ENCODE measurements at regions of chr4 and their contacts with region 1.

Region 1: GRCh38 chr4:40149960-40150385 is 46.9 kb upstream of the RHOH start:
- DNase-seq: peak; percentile 61 to 88 (median 66)
- ATAC-seq: peak; percentile 96
- H3K4me3 ChIP-seq: no peak overlapping the region
- H3K27ac ChIP-seq: no peak overlapping the region
- H3K4me1 ChIP-seq: no peaks in the 10 kb centered on the region
- H3K27me3 ChIP-seq: no peaks in the 10 kb centered on the region
- CTCF ChIP-seq: peak; percentile 78 to 91 (median 86)
- EP300 ChIP-seq: no peak
- POLR2A ChIP-seq: no peak
- RAD21 ChIP-seq: peak; percentile 94 to 97

Region 2: GRCh38 chr4:39732728-39733127 is 417.2 kb before region 1 on chr4:
- CTCF ChIA-PET with region 1: no interaction called
- POLR2A ChIA-PET with region 1: no interaction called
- in situ Hi-C with region 1: no loop called
- intact Hi-C with region 1: no loop called
- DNase-seq: no peak
- ATAC-seq: no peak
- H3K4me3 ChIP-seq: no peak overlapping the region
- H3K27ac ChIP-seq: no peak overlapping the region
- H3K4me1 ChIP-seq: peaks cover 3 to 14% of the 10 kb centered on the region in 2 experiments; a peak in 4 of 5 replicates
- H3K27me3 ChIP-seq: no peaks in the 10 kb centered on the region
- CTCF ChIP-seq: no peak
- EP300 ChIP-seq: no peak
- POLR2A ChIP-seq: no peak
- RAD21 ChIP-seq: no peak

Region 3: GRCh38 chr4:39786838-39787237 is 363.1 kb before region 1 on chr4:
- CTCF ChIA-PET with region 1: no interaction called
- POLR2A ChIA-PET with region 1: no interaction called
- in situ Hi-C with region 1: no loop called
- intact Hi-C with region 1: no loop called
- DNase-seq: no peak
- ATAC-seq: no peak; the same call in 2 of the 3 replicates
- H3K4me3 ChIP-seq: no peak overlapping the region
- H3K27ac ChIP-seq: no peak overlapping the region
- H3K4me1 ChIP-seq: peaks cover 6 to 8% of the 10 kb centered on the region in 2 experiments; a peak in 4 of 5 replicates
- H3K27me3 ChIP-seq: no peaks in the 10 kb centered on the region
- CTCF ChIP-seq: no peak
- EP300 ChIP-seq: no peak
- POLR2A ChIP-seq: no peak
- RAD21 ChIP-seq: no peak

Region 4: GRCh38 chr4:39970671-39971640 is 179.0 kb before region 1 on chr4:
- CTCF ChIA-PET with region 1: no interaction called
- POLR2A ChIA-PET with region 1: no interaction called
- in situ Hi-C with region 1: no loop called
- intact Hi-C with region 1: no loop called
- DNase-seq: peak in 2 of 4 experiments; percentile 18 to 87
- ATAC-seq: peak; percentile 96
- H3K4me3 ChIP-seq: no peak overlapping the region
- H3K27ac ChIP-seq: peak overlapping the region; percentile 58; the same call in 2 of the 3 replicates
- H3K4me1 ChIP-seq: peaks cover 15 to 19% of the 10 kb centered on the region in 2 experiments; a peak in 4 of 5 replicates
- H3K27me3 ChIP-seq: no peaks in the 10 kb centered on the region
- CTCF ChIP-seq: no peak
- EP300 ChIP-seq: peak; percentile 38; the same call in 1 of the 2 replicates
- POLR2A ChIP-seq: no peak
- RAD21 ChIP-seq: no peak

Region 5: GRCh38 chr4:40199999-40200874 is 50.3 kb after region 1 on chr4:
- CTCF ChIA-PET with region 1: no interaction called
- POLR2A ChIA-PET with region 1: no interaction called
- in situ Hi-C with region 1: no loop called
- intact Hi-C with region 1: loop called (anchors 2 kb)
- DNase-seq: peak in 1 of 4 experiments; percentile 83
- ATAC-seq: peak; percentile 33
- H3K4me3 ChIP-seq: peak overlapping the region; percentile 50
- H3K27ac ChIP-seq: peak overlapping the region; percentile 85
- H3K4me1 ChIP-seq: peaks cover 34 to 48% of the 10 kb centered on the region in 2 experiments; a peak in 4 of 5 replicates
- H3K27me3 ChIP-seq: no peaks in the 10 kb centered on the region
- CTCF ChIP-seq: no peak
- EP300 ChIP-seq: 0 out of 2 replicates have a peak, but pooled peaks have one; percentile 4
- POLR2A ChIP-seq: no peak; the same call in 1 of the 2 replicates
- RAD21 ChIP-seq: 0 out of 4 replicates have a peak, but pooled peaks of 1 of the 2 experiments have one; percentile 9

Region 6: GRCh38 chr4:40228497-40229365 is 78.8 kb after region 1 on chr4:
- CTCF ChIA-PET with region 1: no interaction called
- POLR2A ChIA-PET with region 1: no interaction called
- in situ Hi-C with region 1: no loop called
- intact Hi-C with region 1: loop called (anchors 5 kb)
- DNase-seq: peak; percentile 39 to 49 (median 48)
- ATAC-seq: peak; percentile 75
- H3K4me3 ChIP-seq: no peak overlapping the region
- H3K27ac ChIP-seq: 0 out of 3 replicates have a peak overlapping the region, but pooled peaks have one; percentile 6
- H3K4me1 ChIP-seq: peaks cover 6 to 8% of the 10 kb centered on the region in 2 experiments; a peak in 4 of 5 replicates
- H3K27me3 ChIP-seq: no peaks in the 10 kb centered on the region
- CTCF ChIP-seq: peak; percentile 57 to 71 (median 61)
- EP300 ChIP-seq: no peak
- POLR2A ChIP-seq: no peak
- RAD21 ChIP-seq: peak; percentile 62 to 75

Region 7: GRCh38 chr4:40309250-40309774 is 159.3 kb after region 1 on chr4:
- CTCF ChIA-PET with region 1: interaction called, 20 read pairs
- POLR2A ChIA-PET with region 1: interaction called, 4 read pairs
- in situ Hi-C with region 1: loop called (anchors 5 kb)
- intact Hi-C with region 1: loop called (anchors 1 kb)
- DNase-seq: peak; percentile 72 to 92 (median 76)
- ATAC-seq: peak; percentile 90
- H3K4me3 ChIP-seq: no peak overlapping the region
- H3K27ac ChIP-seq: no peak overlapping the region; the same call in 2 of the 3 replicates
- H3K4me1 ChIP-seq: peaks cover 12 to 49% of the 10 kb centered on the region in 2 experiments
- H3K27me3 ChIP-seq: no peaks in the 10 kb centered on the region
- CTCF ChIP-seq: peak; percentile 90 to 92 (median 91)
- EP300 ChIP-seq: no peak
- POLR2A ChIP-seq: no peak
- RAD21 ChIP-seq: peak; percentile 84 to 93

Region 8: GRCh38 chr4:40325189-40326019 is 175.4 kb after region 1 on chr4:
- CTCF ChIA-PET with region 1: interaction called, 24 read pairs
- POLR2A ChIA-PET with region 1: no interaction called
- in situ Hi-C with region 1: no loop called
- intact Hi-C with region 1: no loop called
- DNase-seq: peak; percentile 72 to 79 (median 75)
- ATAC-seq: peak; percentile 95
- H3K4me3 ChIP-seq: no peak overlapping the region
- H3K27ac ChIP-seq: no peak overlapping the region
- H3K4me1 ChIP-seq: no peaks in the 10 kb centered on the region
- H3K27me3 ChIP-seq: peaks cover 7 to 19% of the 10 kb centered on the region in 2 experiments
- CTCF ChIP-seq: peak; percentile 82 to 91 (median 84)
- EP300 ChIP-seq: no peak
- POLR2A ChIP-seq: no peak
- RAD21 ChIP-seq: peak; percentile 82 to 90